Posterior vena cava (tissue), 2 donors: ENCODE measurements at regions of chr2 and their contacts with region 1.

Region 1: DNA sequence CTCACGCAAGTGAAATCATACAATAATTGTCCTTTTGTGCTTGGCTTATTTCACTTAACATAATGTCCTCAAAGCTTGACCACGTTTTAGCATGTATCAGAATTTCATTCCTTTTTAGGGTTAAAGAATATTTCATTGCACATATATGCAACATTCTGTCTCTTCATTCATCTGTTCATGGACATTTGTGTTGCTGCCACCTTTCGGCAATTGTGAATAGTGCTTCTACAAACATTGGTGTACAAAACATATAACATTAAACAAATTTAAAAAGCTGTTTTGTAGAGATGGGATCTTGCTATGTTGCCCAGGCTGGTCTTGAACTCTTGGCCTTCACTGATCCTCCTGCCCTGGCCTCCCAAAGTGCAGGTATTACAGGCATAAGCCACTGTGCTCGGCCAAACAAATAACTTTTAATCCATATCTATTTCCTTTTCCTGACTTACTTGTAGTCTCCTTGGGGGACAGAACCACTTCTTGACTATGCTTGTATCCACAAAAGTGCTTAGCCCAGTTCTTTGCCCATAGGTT is 209.3 kb downstream of the SLC4A3 start:
- DNase-seq: no peak

Region 2: DNA sequence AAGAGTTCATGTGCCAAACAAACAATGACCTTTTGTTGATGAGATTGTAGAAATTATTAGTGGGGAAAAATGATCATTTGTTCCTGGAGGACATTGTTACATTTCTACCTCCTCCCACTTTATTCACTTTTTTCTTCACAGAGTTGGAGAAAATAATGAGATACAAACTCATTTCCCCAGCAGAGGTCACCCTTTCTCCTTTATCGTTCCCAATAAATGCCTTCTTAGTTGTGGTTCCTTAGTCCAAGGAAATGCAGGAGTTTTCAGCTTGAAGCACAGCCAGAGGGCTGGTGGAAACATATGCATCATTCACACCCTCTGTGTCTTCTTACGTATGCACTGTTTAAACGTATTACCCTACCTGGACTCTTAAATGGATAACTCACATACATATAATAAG is 100.5 kb before region 1 on chr2:
- intact Hi-C with region 1: loop called in 1 of 2 experiments (anchors 5 kb)
- DNase-seq: no peak